ENCODE measurements at regions of chr22 and their contacts with region 1.

Region 1: GRCh38 chr22:25048659-25049647 is 96.4 kb downstream of the KIAA1671 start:
- DNase-seq: peak; percentile 75
- ATAC-seq: peak; percentile 94
- H3K4me3 ChIP-seq: no peak overlapping the region
- H3K27ac ChIP-seq: no peak overlapping the region
- H3K4me1 ChIP-seq: no peaks in the 10 kb centered on the region
- H3K27me3 ChIP-seq: no peaks in the 10 kb centered on the region
- CTCF ChIP-seq: peak; percentile 84

Region 2: GRCh38 chr22:24951942-24952836 is 96.8 kb before region 1 on chr22 and contains the start of gene KIAA1671:
- intact Hi-C with region 1: loop called (anchors 5 kb)
- DNase-seq: peak; percentile 94
- ATAC-seq: peak; percentile 95
- H3K4me3 ChIP-seq: peak within 1 kb of the TSS; percentile 73
- H3K27ac ChIP-seq: peak within 1 kb of the TSS; percentile 84
- H3K4me1 ChIP-seq: peaks cover 7% of the 10 kb centered on the region
- H3K27me3 ChIP-seq: no peaks in the 10 kb centered on the region
- CTCF ChIP-seq: peak; percentile 97
- total RNA-seq, gene KIAA1671: 46.7 TPM

Region 3: DNA sequence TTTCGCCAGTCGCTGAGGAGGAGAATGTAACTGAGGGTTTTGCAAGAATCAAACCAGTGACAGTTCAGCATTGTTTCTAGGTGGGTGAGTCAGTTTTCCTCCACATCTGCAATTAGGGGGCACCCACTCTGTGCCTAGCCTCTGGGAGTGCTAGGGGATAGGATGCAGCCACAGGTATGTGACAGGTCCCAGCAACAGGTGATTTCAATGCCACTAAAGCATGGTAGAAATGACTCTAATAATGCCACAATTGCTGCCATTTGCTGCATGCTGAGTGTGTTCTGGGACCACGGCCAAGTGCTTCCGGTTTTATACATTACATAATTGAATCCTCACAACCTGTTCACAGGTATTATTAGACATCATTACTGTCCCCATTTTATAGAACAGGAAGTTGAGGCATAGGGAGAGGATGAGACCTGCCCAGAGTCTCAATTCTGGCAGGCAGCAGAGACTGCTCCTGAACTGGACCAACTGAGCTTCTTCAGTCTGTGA is 171.0 kb after region 1 on chr22:
- intact Hi-C with region 1: no loop called
- DNase-seq: no peak
- ATAC-seq: no peak
- H3K4me3 ChIP-seq: no peak overlapping the region
- H3K27ac ChIP-seq: no peak overlapping the region
- H3K4me1 ChIP-seq: no peaks in the 10 kb centered on the region
- H3K27me3 ChIP-seq: peaks cover 7% of the 10 kb centered on the region
- CTCF ChIP-seq: no peak